MCF 10A (cell line): ENCODE measurements at regions of chrX and their contacts with region 1.

Region 1: GRCh38 chrX:133726211-133726641 is 259.2 kb downstream of the GPC3 start:
- DNase-seq: peak; percentile 63
- H3K4me3 Mint-ChIP-seq: peak overlapping the region; percentile 11
- H3K27ac Mint-ChIP-seq: peak overlapping the region; percentile 95
- H3K4me1 Mint-ChIP-seq: peaks cover 17% of the 10 kb centered on the region
- H3K27me3 Mint-ChIP-seq: peaks cover 29% of the 10 kb centered on the region
- CTCF ChIP-seq: no peak

Region 2: GRCh38 chrX:133699023-133699728 is 27.1 kb before region 1 on chrX:
- CTCF ChIA-PET with region 1: no interaction called
- POLR2A ChIA-PET with region 1: no interaction called
- intact Hi-C with region 1: loop called (anchors 2 kb)
- DNase-seq: no peak
- H3K4me3 Mint-ChIP-seq: no peak overlapping the region
- H3K27ac Mint-ChIP-seq: no peak overlapping the region
- H3K4me1 Mint-ChIP-seq: no peaks in the 10 kb centered on the region
- H3K27me3 Mint-ChIP-seq: peaks cover 85% of the 10 kb centered on the region
- CTCF ChIP-seq: no peak

Region 3: GRCh38 chrX:135476378-135476777 is 1750.2 kb after region 1 on chrX:
- CTCF ChIA-PET with region 1: no interaction called
- POLR2A ChIA-PET with region 1: no interaction called
- intact Hi-C with region 1: no loop called
- DNase-seq: no peak
- H3K4me3 Mint-ChIP-seq: no peak overlapping the region
- H3K27ac Mint-ChIP-seq: no peak overlapping the region
- H3K4me1 Mint-ChIP-seq: peaks cover 6% of the 10 kb centered on the region
- H3K27me3 Mint-ChIP-seq: peaks cover 80% of the 10 kb centered on the region
- CTCF ChIP-seq: no peak